Activated CD4-positive, alpha-beta T cell treated with anti-CD3 and anti-CD28 coated beads for 36 hours (primary cell): ENCODE measurements at regions of chr7 and their contacts with region 1.

Region 1: DNA sequence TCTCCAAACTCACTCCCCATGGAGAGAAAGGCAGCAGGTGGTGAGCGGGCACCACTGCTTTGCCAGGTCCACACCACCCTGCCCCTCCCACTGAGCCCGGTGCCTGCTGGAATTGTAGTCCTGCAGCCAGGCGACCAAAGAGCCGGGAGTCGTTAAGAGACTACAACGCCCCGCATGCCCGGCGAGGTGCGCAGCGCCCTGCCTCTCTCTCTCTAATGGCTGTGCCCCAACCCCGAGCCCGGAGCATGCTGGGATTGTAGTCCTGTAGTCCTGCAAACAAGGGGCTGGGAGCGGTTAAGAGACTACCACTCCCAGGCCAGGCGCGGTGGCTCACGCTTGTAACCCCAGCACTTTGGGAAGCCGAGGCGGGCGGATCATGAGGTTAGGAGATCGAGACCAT is 8.1 kb upstream of the ZNF727 start:
- DNase-seq: no peak
- ATAC-seq: no peak
- H3K4me3 Mint-ChIP-seq: no peak overlapping the region
- H3K27ac Mint-ChIP-seq: no peak overlapping the region
- H3K4me1 Mint-ChIP-seq: no peaks in the 10 kb centered on the region
- H3K27me3 Mint-ChIP-seq: peaks cover 3% of the 10 kb centered on the region

Region 2: GRCh38 chr7:64087501-64087900 is 50.4 kb after region 1 on chr7:
- CTCF ChIA-PET with region 1: no interaction called
- POLR2A ChIA-PET with region 1: no interaction called
- intact Hi-C with region 1: loop called in 1 of 2 experiments (anchors 10 kb)
- DNase-seq: no peak
- ATAC-seq: no peak
- H3K4me3 Mint-ChIP-seq: no peak overlapping the region
- H3K27ac Mint-ChIP-seq: no peak overlapping the region
- H3K4me1 Mint-ChIP-seq: no peaks in the 10 kb centered on the region
- H3K27me3 Mint-ChIP-seq: no peaks in the 10 kb centered on the region